ENCODE measurements at regions of chr7 and their contacts with region 1.

Region 1: DNA sequence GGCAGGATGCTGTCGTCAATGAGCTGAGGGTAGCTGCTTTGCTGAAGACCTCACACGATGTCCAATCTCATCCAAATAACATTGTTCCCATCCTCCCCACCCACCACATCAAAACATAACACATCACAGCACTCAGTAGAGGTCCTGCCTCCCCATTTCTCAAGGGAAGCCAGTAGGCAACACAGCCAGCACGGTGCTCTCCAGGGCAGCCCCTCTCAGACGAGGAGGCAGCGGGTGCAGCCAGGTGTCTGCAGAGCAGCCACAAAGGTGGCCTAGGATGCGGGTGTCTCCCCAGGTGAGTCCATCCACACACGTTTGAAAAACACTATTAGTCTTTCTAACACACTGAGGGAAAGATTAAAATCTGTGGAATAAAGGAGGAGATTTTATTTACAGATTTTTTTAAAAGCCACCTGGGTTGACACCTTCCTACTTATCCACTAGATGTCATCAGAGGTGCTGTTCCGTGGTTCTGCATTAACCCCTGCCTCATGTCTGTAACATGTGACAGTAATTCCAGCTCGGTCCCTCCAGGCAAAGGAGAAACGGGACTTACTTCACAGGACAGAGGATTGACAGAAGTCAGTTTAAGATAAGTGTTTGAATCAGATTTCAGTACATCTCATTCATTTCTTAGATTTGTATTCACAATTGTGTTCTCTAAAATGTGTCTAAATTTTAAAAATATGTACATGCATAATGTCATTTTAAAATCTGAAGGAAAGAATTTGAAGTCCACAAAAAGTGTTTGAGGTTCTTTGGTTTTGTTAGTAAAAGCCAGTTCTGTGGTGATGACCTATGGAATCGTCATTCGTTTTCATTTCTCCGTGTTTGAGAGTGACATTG is 68.0 kb downstream of the LANCL2 start:
- DNase-seq: peak; percentile 55
- H3K4me3 Mint-ChIP-seq: no peak overlapping the region
- H3K27ac Mint-ChIP-seq: no peak overlapping the region
- H3K4me1 Mint-ChIP-seq: peaks cover under 1% of the 10 kb centered on the region
- H3K27me3 Mint-ChIP-seq: no peaks in the 10 kb centered on the region
- CTCF ChIP-seq: peak; percentile 52

Region 2: DNA sequence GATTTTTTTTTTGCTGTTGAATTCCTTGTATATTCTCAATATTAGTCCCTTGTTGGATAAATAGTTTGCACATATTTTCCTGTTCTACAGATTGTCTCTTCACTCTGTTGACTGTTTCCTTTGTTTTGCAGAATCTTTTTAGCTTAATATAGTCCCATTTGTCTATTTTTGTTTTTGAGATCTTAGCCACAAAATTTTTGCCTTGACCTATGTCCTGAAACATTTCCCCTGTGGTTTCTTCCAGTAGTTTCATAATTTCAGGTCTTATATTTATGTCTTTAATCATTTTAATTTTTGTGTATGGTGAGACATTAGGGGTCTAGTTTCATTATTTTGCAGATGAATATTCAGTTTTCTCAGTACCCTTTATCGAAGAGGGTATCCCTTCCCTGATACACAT is 24.6 kb after region 1 on chr7:
- CTCF ChIA-PET with region 1: no interaction called
- POLR2A ChIA-PET with region 1: no interaction called
- intact Hi-C with region 1: no loop called
- DNase-seq: no peak
- H3K4me3 Mint-ChIP-seq: no peak overlapping the region
- H3K27ac Mint-ChIP-seq: no peak overlapping the region
- H3K4me1 Mint-ChIP-seq: no peaks in the 10 kb centered on the region
- H3K27me3 Mint-ChIP-seq: no peaks in the 10 kb centered on the region
- CTCF ChIP-seq: no peak

Region 3: GRCh38 chr7:55593515-55594318 is 160.6 kb after region 1 on chr7:
- CTCF ChIA-PET with region 1: interaction called, 35 read pairs
- POLR2A ChIA-PET with region 1: interaction called, 4 read pairs
- intact Hi-C with region 1: loop called (anchors 1 kb)
- DNase-seq: peak; percentile 75
- H3K4me3 Mint-ChIP-seq: no peak overlapping the region
- H3K27ac Mint-ChIP-seq: no peak overlapping the region
- H3K4me1 Mint-ChIP-seq: peaks cover 6% of the 10 kb centered on the region
- H3K27me3 Mint-ChIP-seq: peaks cover 10% of the 10 kb centered on the region
- CTCF ChIP-seq: peak; percentile 85